Activated CD4-positive, alpha-beta T cell treated with anti-CD3 and anti-CD28 coated beads for 36 hours (primary cell): ENCODE measurements at regions of chr1 and their contacts with region 1.

Region 1: DNA sequence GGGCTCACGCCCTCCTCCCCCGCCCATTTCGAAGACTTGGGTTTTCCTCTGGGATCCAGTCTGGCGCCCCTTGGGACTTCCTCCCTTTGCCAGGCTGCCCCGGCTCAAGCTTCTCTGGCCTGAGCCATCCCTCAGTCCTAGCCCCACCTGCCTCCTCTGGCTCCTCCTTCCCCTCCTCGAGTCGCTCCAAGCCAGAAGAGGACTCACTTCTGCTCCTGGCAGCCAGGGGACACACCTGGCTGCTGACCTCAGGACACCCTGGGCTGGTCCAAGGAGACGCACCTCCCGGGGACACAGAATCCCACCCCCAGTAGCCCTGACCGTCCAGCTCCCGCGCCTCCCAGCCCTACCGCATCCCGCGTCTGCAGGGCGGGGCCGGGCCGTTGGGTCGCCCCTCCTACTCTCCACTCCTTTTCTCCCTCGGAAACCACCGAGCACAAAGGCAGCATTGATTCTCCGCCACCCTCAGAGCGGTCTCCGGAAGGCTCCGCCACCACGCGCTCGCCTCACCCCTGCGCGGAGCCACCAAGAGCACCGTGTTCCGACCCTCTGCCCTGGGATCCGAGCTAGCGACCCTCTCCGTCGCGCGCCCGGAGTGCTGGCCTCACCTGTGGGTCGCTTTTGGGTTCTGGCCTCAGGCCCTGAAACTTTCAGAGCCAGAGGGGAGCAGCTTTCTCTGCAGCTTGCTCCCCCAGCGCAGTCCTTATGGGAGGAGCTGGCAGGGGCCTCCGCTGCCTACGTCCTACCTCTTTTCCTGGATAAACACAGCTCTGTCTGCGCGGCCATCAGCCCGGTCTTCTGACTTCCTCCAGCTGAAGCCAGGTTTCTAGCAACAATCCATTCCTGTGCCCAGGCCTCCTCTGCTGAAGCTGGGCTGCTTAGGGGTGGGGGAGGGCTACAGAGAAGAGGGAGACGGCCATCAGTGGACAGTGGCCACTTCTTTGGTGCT is at the start of gene C2CD4D:
- DNase-seq: peak; percentile 84
- ATAC-seq: peak; percentile 76
- H3K4me3 Mint-ChIP-seq: peak within 1 kb of the TSS; percentile 72
- H3K27ac Mint-ChIP-seq: peak within 1 kb of the TSS; percentile 86
- H3K4me1 Mint-ChIP-seq: peaks cover 37% of the 10 kb centered on the region
- H3K27me3 Mint-ChIP-seq: no peaks in the 10 kb centered on the region
- total RNA-seq, gene C2CD4D: 2.1 to 2.4 TPM

Region 2: DNA sequence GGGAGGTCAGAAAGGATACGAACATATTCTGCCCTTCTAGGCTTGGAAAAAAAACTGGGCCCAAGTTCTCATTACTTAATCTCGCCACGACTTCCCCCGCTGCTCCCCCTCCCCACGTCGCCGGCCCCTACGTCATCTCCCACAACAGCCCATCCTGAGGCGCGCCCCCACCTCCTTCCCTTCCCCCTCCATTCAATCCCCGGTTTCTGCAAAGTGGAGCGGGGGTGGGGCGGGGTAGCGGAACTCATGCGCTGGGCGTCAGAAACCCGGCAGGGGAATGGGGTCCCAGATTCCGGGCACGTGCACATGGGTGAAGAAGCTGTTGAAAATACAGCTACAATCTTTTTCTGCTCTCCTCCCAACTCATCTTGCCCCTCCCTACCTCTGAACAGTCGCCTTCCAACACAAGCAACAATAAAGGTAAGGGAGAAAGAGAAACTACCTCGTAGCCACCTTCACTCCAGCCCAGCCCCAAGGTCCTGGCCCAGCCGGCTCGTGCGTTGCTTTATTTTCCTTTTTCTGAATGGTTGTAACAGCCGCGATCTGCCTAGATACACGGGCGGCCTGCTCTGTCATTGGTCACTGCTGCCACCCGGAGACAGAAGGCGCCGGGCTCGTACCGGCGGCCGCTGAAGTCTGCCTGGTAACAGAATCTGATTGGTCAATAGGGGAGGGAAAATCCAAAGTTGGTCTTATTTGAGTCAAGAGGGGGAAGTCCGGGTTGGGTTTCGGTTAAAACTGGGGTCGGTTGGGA is 492.8 kb before region 1 on chr1 and contains the start of gene RFX5:
- CTCF ChIA-PET with region 1: no interaction called
- POLR2A ChIA-PET with region 1: no interaction called
- intact Hi-C with region 1: loop called in 1 of 2 experiments (anchors 2 kb)
- DNase-seq: peak; percentile 96
- ATAC-seq: peak; percentile 98
- H3K4me3 Mint-ChIP-seq: peak within 1 kb of the TSS; percentile 96
- H3K27ac Mint-ChIP-seq: peak within 1 kb of the TSS; percentile 94
- H3K4me1 Mint-ChIP-seq: peaks cover 31% of the 10 kb centered on the region
- H3K27me3 Mint-ChIP-seq: no peaks in the 10 kb centered on the region
- total RNA-seq, gene RFX5: 47.6 to 50.4 TPM

Region 3: DNA sequence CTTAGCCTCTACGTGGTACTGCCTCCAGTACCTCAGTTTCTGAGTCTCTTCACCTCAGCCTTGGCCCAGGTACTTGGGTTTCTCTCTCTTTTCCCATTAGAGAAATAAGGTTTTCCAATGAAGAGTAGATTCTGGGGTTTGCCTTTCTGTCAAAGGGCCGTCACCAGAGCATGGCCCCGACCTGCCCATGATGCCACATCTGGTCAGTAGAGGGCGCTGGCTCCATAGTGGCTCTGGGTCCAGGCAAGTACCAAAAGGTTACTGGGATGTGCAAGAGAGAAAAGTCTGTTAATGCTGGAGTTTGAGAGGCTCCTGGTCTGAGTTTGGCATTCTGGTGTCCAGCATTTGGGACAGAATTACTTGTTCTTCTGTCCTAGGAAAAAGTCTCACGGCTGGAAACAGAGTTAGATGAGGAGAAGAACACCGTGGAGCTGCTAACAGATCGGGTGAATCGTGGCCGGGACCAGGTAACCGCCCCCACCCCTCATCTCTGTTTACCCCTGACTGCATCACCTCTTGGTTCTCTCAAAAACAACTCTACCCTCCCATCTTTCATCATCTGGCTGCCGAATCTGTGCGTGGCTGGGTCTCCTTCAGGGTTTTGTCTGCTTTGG is 305.0 kb before region 1 on chr1:
- CTCF ChIA-PET with region 1: interaction called, 4 read pairs
- POLR2A ChIA-PET with region 1: no interaction called
- intact Hi-C with region 1: loop called (anchors 1 to 2 kb)
- DNase-seq: peak; percentile 91
- ATAC-seq: peak; percentile 87
- H3K4me3 Mint-ChIP-seq: no peak overlapping the region
- H3K27ac Mint-ChIP-seq: no peak overlapping the region
- H3K4me1 Mint-ChIP-seq: peaks cover 5% of the 10 kb centered on the region
- H3K27me3 Mint-ChIP-seq: no peaks in the 10 kb centered on the region

Region 4: DNA sequence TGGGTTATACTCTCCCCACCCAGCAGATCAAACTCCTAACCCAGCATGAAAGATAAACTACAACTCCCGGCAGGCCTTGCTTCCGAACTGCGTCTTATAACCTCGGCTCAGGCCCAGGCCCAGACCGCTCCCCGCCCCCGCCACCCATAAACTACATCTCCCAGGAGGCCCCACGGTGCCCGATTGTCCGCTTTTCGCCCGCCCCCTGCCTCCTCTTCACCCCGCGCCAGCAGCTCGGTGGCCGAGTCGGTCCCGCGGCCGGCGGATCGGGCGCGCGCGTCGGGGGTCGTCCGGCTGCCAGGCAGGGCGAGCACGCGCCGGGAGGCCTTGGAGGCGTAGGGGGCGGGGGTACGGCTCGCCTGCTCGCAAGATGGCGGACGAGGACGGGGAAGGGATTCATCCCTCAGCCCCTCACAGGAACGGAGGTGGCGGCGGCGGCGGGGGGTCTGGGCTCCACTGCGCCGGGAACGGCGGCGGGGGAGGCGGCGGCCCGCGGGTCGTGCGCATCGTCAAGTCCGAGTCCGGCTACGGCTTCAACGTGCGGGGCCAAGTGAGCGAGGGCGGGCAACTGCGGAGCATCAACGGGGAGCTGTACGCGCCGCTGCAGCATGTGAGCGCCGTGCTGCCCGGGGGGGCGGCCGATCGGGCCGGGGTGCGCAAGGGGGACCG is 227.8 kb before region 1 on chr1 and contains the start of gene SNX27:
- CTCF ChIA-PET with region 1: interaction called, 3 read pairs
- POLR2A ChIA-PET with region 1: no interaction called
- intact Hi-C with region 1: loop called in 1 of 2 experiments (anchors 5 kb)
- DNase-seq: peak; percentile 95
- ATAC-seq: peak; percentile 93
- H3K4me3 Mint-ChIP-seq: peak within 1 kb of the TSS; percentile 99
- H3K27ac Mint-ChIP-seq: peak within 1 kb of the TSS; percentile 95
- H3K4me1 Mint-ChIP-seq: peaks cover 46% of the 10 kb centered on the region
- H3K27me3 Mint-ChIP-seq: peaks cover 6% of the 10 kb centered on the region
- total RNA-seq, gene SNX27: 28.5 to 29.1 TPM

Region 5: GRCh38 chr1:151733134-151733533 is 106.6 kb before region 1 on chr1:
- CTCF ChIA-PET with region 1: interaction called, 12 read pairs
- POLR2A ChIA-PET with region 1: no interaction called
- intact Hi-C with region 1: loop called in 1 of 2 experiments (anchors 1 kb)
- DNase-seq: no peak
- ATAC-seq: no peak
- H3K4me3 Mint-ChIP-seq: no peak overlapping the region
- H3K27ac Mint-ChIP-seq: no peak overlapping the region
- H3K4me1 Mint-ChIP-seq: no peaks in the 10 kb centered on the region
- H3K27me3 Mint-ChIP-seq: peaks cover 18% of the 10 kb centered on the region

Region 6: DNA sequence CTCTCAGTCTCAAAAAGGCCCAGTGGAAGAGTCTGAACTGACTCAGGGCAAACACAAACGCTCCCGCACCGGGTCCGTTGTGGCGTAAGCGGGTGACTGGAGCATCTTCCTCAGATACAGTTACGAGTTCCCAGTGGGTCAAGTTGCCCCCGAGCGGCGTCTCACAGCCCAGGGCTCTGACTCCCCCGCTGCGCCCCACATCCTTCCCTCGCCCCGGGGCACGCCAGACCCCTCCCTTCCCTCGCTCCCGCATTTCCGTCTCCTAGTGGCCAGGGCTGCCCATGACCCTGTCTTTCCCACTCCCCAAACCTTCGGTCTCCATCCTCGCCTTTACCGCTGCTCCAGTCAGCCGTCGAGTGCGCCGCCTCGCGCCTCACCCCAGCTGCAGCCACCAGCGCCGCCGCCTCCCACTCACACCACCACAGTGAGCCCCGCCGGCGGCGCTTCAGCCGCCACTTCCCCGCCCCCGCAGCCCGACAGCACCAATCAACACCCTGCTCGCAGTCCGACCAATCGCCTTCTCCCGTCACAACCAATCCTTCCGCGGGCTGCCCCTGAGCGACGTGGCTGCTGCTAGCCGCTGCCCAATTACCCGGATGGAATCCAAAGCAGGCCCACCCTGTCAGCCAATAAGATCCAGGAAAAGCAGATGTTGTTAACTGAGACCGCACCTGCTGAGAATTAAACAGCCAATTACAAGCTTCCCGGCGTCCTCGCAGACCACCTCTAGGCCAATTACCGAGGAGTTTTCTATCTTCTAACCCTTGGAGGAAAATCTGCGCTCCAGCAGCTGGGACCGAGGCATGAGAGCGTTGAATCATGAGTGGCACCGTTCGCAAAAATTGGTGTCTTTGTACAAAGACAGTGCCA is 49.4 kb before region 1 on chr1 and contains the start of gene TDRKH:
- CTCF ChIA-PET with region 1: interaction called, 7 read pairs
- POLR2A ChIA-PET with region 1: no interaction called
- intact Hi-C with region 1: loop called (anchors 1 kb)
- DNase-seq: peak; percentile 100
- ATAC-seq: peak; percentile 98
- H3K4me3 Mint-ChIP-seq: peak within 1 kb of the TSS; percentile 95
- H3K27ac Mint-ChIP-seq: peak within 1 kb of the TSS; percentile 89
- H3K4me1 Mint-ChIP-seq: peaks cover 18% of the 10 kb centered on the region
- H3K27me3 Mint-ChIP-seq: no peaks in the 10 kb centered on the region
- total RNA-seq, gene TDRKH: 18.4 to 19.9 TPM

Region 7: DNA sequence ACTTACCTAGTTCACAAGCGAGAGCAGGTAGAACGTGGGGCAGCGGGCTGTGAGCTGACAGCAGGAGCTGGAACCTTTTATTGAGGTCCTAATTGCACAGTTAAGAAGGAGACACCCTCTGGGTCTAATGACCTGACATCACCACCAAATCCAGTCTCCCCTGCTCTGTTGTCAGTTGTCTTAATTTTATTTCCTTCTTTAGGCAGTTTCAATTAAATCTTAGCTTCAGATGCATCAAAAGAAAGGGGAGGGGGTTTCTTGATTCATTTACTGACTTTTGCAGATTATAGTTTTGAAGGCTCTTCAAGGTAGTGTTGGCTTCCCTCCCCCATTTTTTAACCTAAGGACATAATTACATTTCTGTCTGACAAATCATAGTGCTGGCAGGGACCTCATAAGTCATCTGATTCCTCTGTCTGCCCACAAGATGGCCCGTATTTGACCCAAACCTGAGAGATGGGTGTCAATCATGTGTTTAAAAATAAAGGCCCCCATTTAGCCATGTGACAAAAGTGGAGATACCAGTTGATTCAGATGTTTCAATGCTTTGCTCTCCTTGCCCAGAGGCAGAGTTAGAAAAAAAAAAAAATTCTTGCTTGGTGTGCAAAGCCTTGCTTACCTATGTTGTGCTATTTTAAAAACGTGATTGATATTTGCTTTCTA is 249.4 kb after region 1 on chr1 and contains the start of gene TCHHL1:
- CTCF ChIA-PET with region 1: no interaction called
- POLR2A ChIA-PET with region 1: no interaction called
- intact Hi-C with region 1: no loop called
- DNase-seq: no peak
- ATAC-seq: no peak
- H3K4me3 Mint-ChIP-seq: no peak within 1 kb of the TSS
- H3K27ac Mint-ChIP-seq: no peak within 1 kb of the TSS
- H3K4me1 Mint-ChIP-seq: no peaks in the 10 kb centered on the region
- H3K27me3 Mint-ChIP-seq: peaks cover 29% of the 10 kb centered on the region
- total RNA-seq, gene TCHHL1: not detected